ENCODE measurements at regions of chr16 and their contacts with region 1.

Region 1: GRCh38 chr16:11757671-11758545 is 15.3 kb upstream of the TXNDC11 start:
- DNase-seq: peak; percentile 50
- H3K4me3 Mint-ChIP-seq: no peak overlapping the region
- H3K27ac Mint-ChIP-seq: peak overlapping the region; percentile 38
- H3K4me1 Mint-ChIP-seq: peaks cover 32% of the 10 kb centered on the region
- H3K27me3 Mint-ChIP-seq: no peaks in the 10 kb centered on the region
- CTCF ChIP-seq: no peak

Region 2: DNA sequence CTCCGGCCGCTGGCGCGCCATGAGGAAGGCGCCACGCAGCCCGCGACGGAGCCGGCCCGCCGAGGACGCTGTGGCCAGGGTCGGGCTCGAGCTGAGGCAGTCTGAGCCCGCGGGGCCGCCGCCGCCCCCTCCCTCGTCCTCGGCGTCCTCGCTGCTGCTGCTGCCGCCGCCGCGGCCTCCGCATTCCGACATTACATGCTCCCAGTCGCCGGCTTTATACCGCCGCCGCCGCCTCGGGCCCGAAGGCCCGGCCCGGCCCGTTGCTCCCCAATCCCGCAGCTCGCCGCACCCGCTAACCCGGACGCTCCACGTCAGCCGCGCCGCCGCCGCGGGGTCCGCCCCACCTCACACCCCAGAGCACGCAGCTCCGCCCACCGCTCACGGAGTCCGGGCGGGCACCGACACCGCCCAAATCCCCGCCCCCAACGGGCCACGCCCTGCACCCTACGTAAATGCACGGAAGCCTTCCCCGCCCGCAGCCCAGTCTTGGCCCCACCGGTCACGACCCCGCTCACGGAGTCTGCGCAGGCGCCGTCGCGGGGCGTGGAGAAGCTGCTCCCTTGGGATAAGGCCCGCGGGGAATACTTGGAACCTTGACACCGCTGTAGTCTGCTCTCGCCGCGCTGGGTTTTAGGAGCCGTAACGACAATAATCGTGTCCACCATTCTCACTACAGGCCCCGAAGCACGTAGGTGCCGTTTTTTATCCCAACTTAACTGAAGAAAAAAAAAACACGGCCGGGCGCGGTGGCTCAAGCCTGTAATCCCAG is 15.2 kb before region 1 on chr16 and contains the start of gene TXNDC11:
- CTCF ChIA-PET with region 1: interaction called, 18 read pairs
- intact Hi-C with region 1: no loop called
- DNase-seq: peak; percentile 100
- H3K4me3 Mint-ChIP-seq: peak within 1 kb of the TSS; percentile 85
- H3K27ac Mint-ChIP-seq: peak within 1 kb of the TSS; percentile 98
- H3K4me1 Mint-ChIP-seq: peaks cover 48% of the 10 kb centered on the region
- H3K27me3 Mint-ChIP-seq: no peaks in the 10 kb centered on the region
- CTCF ChIP-seq: no peak
- total RNA-seq, gene TXNDC11: 51.3 and 52.1 TPM in 2 replicates

Region 3: DNA sequence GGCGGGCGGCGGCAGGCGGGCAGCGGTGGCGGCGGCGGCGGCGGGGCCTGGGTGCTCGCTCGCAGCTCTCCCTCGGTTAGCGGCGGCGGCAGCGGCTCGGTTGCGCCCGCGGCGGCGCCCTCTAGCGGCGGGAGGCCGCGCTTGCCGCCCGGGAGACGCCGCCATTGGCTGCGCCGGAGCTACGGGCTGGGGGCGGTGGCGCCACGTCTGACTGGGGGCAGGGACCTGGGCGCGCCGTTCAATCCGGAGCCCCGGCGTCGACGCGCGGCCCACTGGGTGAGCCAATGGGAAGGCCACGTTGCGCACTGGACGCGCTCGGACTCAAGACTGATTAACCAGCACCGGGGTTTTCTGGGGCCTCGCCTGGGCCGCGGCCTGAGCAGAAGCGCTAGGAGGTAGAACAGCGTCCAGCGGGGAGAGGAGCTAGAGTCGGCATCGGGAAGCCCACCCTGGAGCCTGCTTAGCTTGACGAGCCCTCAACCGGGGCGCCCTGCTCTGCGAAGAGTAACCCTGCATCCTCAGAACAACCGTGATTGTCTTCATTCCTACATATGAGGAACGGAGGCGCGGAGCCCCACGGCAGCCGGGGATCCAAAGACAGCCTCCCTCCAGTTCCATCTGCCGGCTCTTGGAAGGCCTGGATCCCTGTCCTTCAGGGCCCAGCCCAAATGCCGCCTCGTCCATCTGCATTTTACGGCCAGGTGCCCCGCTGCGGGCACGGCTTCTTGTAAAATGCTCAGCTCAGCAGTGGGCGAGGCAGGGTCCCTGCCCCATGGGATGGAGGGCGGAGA is 39.5 kb after region 1 on chr16 and contains the start of gene ZC3H7A:
- CTCF ChIA-PET with region 1: interaction called, 9 read pairs
- intact Hi-C with region 1: loop called (anchors 5 kb)
- DNase-seq: peak; percentile 99
- H3K4me3 Mint-ChIP-seq: peak within 1 kb of the TSS; percentile 76
- H3K27ac Mint-ChIP-seq: peak within 1 kb of the TSS; percentile 56
- H3K4me1 Mint-ChIP-seq: peaks cover 48% of the 10 kb centered on the region
- H3K27me3 Mint-ChIP-seq: no peaks in the 10 kb centered on the region
- CTCF ChIP-seq: peak; percentile 91
- total RNA-seq, gene ZC3H7A: 68.7 and 70.9 TPM in 2 replicates

Region 4: DNA sequence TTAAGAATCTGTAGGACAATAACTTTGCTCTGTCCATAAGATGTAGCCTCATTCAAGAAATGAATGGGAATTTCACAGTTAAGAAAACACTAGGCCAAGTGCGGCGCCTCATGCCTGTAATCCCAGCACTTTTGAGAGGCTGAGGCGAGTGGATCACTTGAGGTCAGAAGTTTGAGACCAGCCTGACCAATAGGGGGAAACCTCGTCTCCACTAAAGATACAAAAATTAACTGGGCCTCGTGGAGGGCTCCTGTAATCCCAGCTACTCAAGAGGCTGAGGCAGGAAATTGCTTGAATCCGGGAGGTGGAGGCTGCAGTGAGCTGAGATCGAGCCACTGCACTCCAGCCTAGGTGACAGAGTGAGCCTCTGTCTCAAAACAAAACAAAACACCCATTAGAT is 113.3 kb after region 1 on chr16:
- CTCF ChIA-PET with region 1: no interaction called
- intact Hi-C with region 1: no loop called
- DNase-seq: no peak
- H3K4me3 Mint-ChIP-seq: no peak overlapping the region
- H3K27ac Mint-ChIP-seq: no peak overlapping the region
- H3K4me1 Mint-ChIP-seq: peaks cover 10% of the 10 kb centered on the region
- H3K27me3 Mint-ChIP-seq: no peaks in the 10 kb centered on the region
- CTCF ChIP-seq: no peak